ENCODE measurements at regions of chr10 and their contacts with region 1.

Region 1: GRCh38 chr10:20768843-20769242 is 128.3 kb downstream of the NEBL start:
- H3K4me3 Mint-ChIP-seq: no peak overlapping the region
- H3K27ac Mint-ChIP-seq: no peak overlapping the region
- H3K4me1 Mint-ChIP-seq: peaks cover 20% of the 10 kb centered on the region
- H3K27me3 Mint-ChIP-seq: no peaks in the 10 kb centered on the region

Region 2: GRCh38 chr10:19620811-19621210 is 1148.0 kb before region 1 on chr10:
- intact Hi-C with region 1: loop called (anchors 5 kb)
- H3K4me3 Mint-ChIP-seq: no peak overlapping the region
- H3K27ac Mint-ChIP-seq: no peak overlapping the region
- H3K4me1 Mint-ChIP-seq: no peaks in the 10 kb centered on the region
- H3K27me3 Mint-ChIP-seq: no peaks in the 10 kb centered on the region

Region 3: GRCh38 chr10:20682782-20683181 is 86.1 kb before region 1 on chr10:
- intact Hi-C with region 1: no loop called
- H3K4me3 Mint-ChIP-seq: no peak overlapping the region
- H3K27ac Mint-ChIP-seq: no peak overlapping the region
- H3K4me1 Mint-ChIP-seq: no peaks in the 10 kb centered on the region
- H3K27me3 Mint-ChIP-seq: no peaks in the 10 kb centered on the region